Head of caudate nucleus (tissue), 42 donors: ENCODE measurements at regions of chr7 and their contacts with region 1.

Region 1: GRCh38 chr7:73842247-73842895 is at the start of gene METTL27:
- DNase-seq: peak; percentile 84 to 98 (median 94)

Region 2: GRCh38 chr7:73738612-73739374 is 103.6 kb before region 1 on chr7 and contains the start of gene ABHD11:
- intact Hi-C with region 1: loop called (anchors 5 kb)
- DNase-seq: peak; percentile 98 to 100 (median 99)